Activated CD4-positive, alpha-beta T cell treated with anti-CD3 and anti-CD28 coated beads, Interleukin-2, amount 10 ng/mL, durations not matched to agents 24 days and 14 days (primary cell): ENCODE measurements at regions of chr4 and their contacts with region 1.

Region 1: GRCh38 chr4:145618932-145619638 is at the start of gene MMAA:
- DNase-seq: peak; percentile 99
- H3K4me3 Mint-ChIP-seq: peak within 1 kb of the TSS; percentile 98
- H3K27ac Mint-ChIP-seq: peak within 1 kb of the TSS; percentile 99
- H3K4me1 Mint-ChIP-seq: peaks cover 39% of the 10 kb centered on the region
- H3K27me3 Mint-ChIP-seq: peaks cover 2% of the 10 kb centered on the region
- total RNA-seq, gene MMAA: 18.9 and 19.5 TPM in 2 replicates

Region 2: DNA sequence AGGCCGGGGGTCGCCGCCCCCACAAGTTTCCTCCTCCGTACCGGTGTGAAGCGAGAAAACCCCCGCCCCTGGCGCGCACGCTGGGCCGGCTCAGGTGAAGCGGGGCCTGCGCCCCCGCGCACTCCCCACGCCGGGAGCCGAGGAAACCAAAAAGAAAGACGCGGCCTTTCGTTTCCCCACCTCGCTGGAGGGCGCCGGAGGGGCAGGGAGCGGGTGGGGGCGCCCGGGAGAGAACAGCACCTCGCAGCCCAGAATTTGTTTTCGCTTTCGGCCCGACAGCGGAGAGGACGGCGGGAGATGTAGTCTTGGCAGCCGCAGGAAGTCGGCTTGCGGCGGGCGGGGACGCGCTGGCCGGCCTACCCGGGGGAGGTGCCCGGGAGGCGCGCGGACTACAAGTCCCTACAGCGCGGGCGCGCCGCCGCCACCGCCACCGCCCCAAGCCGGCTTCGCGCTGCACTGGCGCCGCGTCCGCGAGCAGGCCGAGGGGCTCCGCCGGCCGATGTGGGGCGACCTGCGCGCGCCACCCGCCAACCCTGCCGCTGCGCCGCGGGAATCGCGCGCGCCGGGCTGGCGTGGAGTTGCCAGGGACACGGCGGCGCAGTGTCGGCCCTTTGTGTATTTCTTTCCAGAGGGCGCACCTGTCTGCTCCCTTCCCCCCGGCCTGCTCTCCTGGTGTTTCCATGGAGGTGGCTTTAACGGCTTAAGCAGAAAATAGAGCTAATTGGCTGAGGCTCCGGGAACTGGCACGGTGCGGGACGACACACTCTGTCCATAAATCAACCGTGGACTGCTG is 438.6 kb before region 1 on chr4 and contains the start of gene OTUD4:
- intact Hi-C with region 1: loop called (anchors 1 kb)
- DNase-seq: peak; percentile 98
- H3K4me3 Mint-ChIP-seq: peak within 1 kb of the TSS; percentile 95
- H3K27ac Mint-ChIP-seq: peak within 1 kb of the TSS; percentile 97
- H3K4me1 Mint-ChIP-seq: peaks cover 24% of the 10 kb centered on the region
- H3K27me3 Mint-ChIP-seq: peaks cover 3% of the 10 kb centered on the region
- total RNA-seq, gene OTUD4: 81.2 and 86.4 TPM in 2 replicates

Region 3: GRCh38 chr4:145299380-145300076 is 319.6 kb before region 1 on chr4:
- intact Hi-C with region 1: loop called (anchors 5 kb)
- DNase-seq: peak; percentile 74
- H3K4me3 Mint-ChIP-seq: no peak overlapping the region
- H3K27ac Mint-ChIP-seq: no peak overlapping the region
- H3K4me1 Mint-ChIP-seq: peaks cover 11% of the 10 kb centered on the region
- H3K27me3 Mint-ChIP-seq: peaks cover 14% of the 10 kb centered on the region

Region 4: GRCh38 chr4:145580906-145581305 is 38.2 kb before region 1 on chr4:
- intact Hi-C with region 1: no loop called
- DNase-seq: no peak
- H3K4me3 Mint-ChIP-seq: no peak overlapping the region
- H3K27ac Mint-ChIP-seq: no peak overlapping the region
- H3K4me1 Mint-ChIP-seq: no peaks in the 10 kb centered on the region
- H3K27me3 Mint-ChIP-seq: peaks cover 12% of the 10 kb centered on the region

Region 5: GRCh38 chr4:145635630-145636029 is 16.5 kb after region 1 on chr4:
- intact Hi-C with region 1: no loop called
- DNase-seq: no peak
- H3K4me3 Mint-ChIP-seq: no peak overlapping the region
- H3K27ac Mint-ChIP-seq: no peak overlapping the region
- H3K4me1 Mint-ChIP-seq: peaks cover 24% of the 10 kb centered on the region
- H3K27me3 Mint-ChIP-seq: no peaks in the 10 kb centered on the region

Region 6: DNA sequence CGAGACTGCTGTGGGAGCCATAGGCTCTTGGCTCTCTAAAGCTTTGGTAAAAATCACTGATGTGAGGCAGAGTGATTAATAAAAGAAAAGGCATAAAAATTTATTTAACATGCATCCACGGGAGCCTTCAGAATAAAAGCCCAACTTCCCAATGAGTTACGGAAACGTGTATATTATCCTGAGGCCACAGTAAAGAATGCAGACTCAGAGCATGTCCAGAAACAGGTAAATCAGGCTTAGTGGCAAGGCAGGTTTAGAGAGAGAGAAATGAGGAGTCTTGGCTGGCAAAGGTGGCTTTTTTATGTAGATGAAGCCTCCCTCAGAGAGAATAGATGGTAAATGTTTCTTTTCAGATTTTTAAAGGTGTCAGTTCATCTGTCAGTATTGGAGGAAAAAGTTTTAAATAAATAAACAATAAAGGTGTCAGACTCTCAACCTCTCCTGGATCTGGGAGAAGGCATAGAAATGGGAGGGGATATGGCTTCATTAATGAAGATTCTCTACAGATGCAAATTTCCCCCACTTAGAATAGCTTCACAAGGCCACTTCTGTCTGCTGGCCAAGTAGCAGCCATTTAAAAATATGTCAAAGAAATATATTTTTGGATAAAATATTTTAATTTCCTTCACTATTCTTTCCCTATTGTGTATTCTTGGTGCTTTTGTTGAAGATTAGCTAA is 84.9 kb after region 1 on chr4:
- intact Hi-C with region 1: no loop called
- DNase-seq: no peak
- H3K4me3 Mint-ChIP-seq: no peak overlapping the region
- H3K27ac Mint-ChIP-seq: no peak overlapping the region
- H3K4me1 Mint-ChIP-seq: peaks cover 6% of the 10 kb centered on the region
- H3K27me3 Mint-ChIP-seq: peaks cover 7% of the 10 kb centered on the region

Region 7: DNA sequence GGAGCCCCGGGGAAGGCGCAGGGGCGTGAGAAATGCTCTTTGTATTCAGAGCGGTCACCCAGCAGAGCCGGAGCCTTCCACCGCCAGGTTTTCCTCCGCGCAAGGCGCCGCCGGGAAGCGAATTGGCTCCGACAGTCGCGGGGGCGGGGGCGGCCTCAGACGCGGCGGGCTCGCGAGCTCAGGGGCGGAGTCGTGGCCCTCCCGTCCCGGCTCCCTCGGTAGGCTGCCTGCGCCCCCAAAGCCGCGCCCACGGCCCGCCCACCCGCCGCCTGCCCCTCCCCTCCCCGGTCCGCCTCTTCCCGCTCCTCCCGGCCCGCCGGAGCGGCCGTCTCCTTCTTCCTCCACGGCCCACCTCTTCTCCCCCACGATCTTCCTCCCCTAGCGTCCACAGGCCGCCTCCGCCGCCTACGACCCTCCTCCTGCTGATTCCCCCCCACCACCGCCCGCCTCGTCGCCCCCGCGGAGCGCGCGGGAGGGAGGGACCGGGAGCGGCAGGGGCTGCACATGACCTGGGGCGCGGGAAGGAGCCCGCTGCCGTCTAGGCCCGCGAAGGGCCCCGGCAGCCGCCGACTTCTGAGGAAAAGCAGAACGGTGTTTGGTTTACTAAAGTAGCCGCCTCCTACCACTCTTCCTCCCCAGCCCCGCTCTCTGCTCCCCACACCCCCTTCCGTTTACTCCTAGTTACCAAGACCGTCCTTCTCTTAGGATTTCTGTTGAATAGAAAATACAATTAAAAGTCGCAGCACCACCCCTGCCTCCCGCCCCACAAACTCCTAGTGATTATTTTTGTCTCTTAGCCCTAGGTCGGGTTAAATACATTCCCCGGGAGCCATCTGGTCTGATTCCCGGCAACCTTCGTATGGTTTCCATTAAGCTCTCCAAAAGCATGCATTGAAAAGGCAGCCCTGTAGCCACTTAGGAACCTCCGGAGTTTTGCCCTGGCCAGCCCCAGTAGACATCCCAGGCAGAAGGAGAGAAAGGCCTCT is 114.1 kb after region 1 on chr4:
- intact Hi-C with region 1: loop called (anchors 1 kb)
- DNase-seq: peak; percentile 96
- H3K4me3 Mint-ChIP-seq: peak overlapping the region; percentile 77
- H3K27ac Mint-ChIP-seq: peak overlapping the region; percentile 76
- H3K4me1 Mint-ChIP-seq: peaks cover 18% of the 10 kb centered on the region
- H3K27me3 Mint-ChIP-seq: peaks cover 2% of the 10 kb centered on the region

Region 8: GRCh38 chr4:145815626-145816025 is 196.5 kb after region 1 on chr4:
- intact Hi-C with region 1: loop called (anchors 1 kb)
- DNase-seq: no peak
- H3K4me3 Mint-ChIP-seq: peak overlapping the region; percentile 61
- H3K27ac Mint-ChIP-seq: peak overlapping the region; percentile 93
- H3K4me1 Mint-ChIP-seq: peaks cover 38% of the 10 kb centered on the region
- H3K27me3 Mint-ChIP-seq: no peaks in the 10 kb centered on the region

Region 9: GRCh38 chr4:146132445-146132844 is 513.4 kb after region 1 on chr4:
- intact Hi-C with region 1: loop called (anchors 5 kb)
- DNase-seq: peak; percentile 73
- H3K4me3 Mint-ChIP-seq: peak overlapping the region; percentile 7
- H3K27ac Mint-ChIP-seq: peak overlapping the region; percentile 55
- H3K4me1 Mint-ChIP-seq: peaks cover 11% of the 10 kb centered on the region
- H3K27me3 Mint-ChIP-seq: peaks cover 6% of the 10 kb centered on the region

Region 10: GRCh38 chr4:146981651-146982050 is 1362.6 kb after region 1 on chr4:
- intact Hi-C with region 1: no loop called
- DNase-seq: no peak
- H3K4me3 Mint-ChIP-seq: no peak overlapping the region
- H3K27ac Mint-ChIP-seq: no peak overlapping the region
- H3K4me1 Mint-ChIP-seq: no peaks in the 10 kb centered on the region
- H3K27me3 Mint-ChIP-seq: no peaks in the 10 kb centered on the region